Activated CD4-positive, alpha-beta memory T cell treated with anti-CD3 and anti-CD28 coated beads for 36 hours (primary cell): ENCODE measurements at regions of chr2 and their contacts with region 1.

Region 1: DNA sequence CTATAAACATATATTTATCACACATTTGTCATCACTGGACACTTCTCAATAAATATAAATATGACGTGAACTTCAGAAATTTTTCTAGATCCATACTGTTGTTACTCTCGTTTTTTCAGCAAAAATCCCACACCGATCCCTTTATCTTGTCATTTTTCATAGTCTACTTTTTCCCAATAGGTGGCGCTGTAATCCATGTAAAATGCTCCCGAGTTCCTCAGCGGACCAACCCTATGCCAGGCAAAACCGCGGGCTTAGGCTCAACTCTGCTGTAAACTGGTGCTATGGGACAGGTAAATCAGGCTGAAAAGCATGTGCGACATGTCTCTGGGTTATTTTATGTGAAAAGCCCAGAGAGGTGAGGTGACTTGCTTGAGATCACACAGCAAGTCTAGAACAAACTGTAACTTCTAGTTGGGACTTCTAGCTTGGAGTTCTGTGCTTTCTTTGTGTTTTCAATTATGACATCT is 104.0 kb downstream of the COBLL1 start:
- DNase-seq: peak; percentile 12
- H3K4me3 Mint-ChIP-seq: no peak overlapping the region
- H3K27ac Mint-ChIP-seq: no peak overlapping the region
- H3K4me1 Mint-ChIP-seq: no peaks in the 10 kb centered on the region
- H3K27me3 Mint-ChIP-seq: no peaks in the 10 kb centered on the region

Region 2: DNA sequence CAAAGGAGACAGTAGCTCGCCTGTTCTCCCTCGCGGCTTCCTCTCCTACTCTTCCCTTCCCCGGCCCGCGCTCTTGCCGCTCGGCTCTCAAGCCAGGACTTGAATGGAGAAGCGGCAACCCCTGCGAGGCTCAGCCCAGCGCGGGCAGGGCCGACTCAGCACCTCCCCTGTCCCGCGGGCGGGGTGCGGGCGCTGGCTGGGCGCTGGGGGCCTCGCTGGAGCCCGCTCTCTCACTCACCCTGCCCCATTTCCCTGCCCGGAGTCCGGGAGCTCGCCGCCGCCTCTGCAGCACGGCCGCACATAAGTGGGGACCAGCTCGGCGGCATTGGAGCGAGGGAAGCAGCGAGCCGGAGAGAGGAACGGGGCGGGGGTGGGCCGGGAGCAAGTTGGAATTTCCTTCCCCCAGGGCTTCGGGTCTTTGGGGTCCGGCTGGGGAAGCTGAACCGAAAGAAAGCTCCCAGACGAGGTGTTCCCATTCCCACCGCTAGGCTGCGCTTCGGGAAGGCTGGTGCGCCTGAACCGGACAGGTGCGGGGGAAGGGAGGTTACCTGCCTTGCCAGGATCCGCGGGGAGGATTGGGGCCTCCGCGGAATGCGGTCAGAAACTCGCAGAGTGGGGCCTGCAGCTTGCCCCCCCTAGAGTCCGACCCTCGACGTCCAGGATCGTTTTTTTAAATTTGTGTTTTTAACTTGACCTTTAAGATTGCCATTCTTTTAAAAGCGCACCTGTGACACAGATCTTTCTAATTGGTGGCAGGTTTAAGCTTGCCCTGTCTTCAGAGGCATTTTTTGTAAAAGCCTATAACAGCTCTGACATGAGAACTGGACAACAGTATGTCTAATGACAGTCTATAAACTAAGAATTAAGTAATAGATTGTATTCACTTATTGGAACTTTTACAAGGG is 104.3 kb after region 1 on chr2 and contains the start of gene COBLL1:
- CTCF ChIA-PET with region 1: no interaction called
- POLR2A ChIA-PET with region 1: no interaction called
- intact Hi-C with region 1: loop called (anchors 1 kb)
- DNase-seq: peak; percentile 43
- H3K4me3 Mint-ChIP-seq: peak within 1 kb of the TSS; percentile 41
- H3K27ac Mint-ChIP-seq: no peak within 1 kb of the TSS
- H3K4me1 Mint-ChIP-seq: peaks cover 5% of the 10 kb centered on the region
- H3K27me3 Mint-ChIP-seq: peaks cover 36% of the 10 kb centered on the region
- total RNA-seq, gene COBLL1: not detected

Region 3: DNA sequence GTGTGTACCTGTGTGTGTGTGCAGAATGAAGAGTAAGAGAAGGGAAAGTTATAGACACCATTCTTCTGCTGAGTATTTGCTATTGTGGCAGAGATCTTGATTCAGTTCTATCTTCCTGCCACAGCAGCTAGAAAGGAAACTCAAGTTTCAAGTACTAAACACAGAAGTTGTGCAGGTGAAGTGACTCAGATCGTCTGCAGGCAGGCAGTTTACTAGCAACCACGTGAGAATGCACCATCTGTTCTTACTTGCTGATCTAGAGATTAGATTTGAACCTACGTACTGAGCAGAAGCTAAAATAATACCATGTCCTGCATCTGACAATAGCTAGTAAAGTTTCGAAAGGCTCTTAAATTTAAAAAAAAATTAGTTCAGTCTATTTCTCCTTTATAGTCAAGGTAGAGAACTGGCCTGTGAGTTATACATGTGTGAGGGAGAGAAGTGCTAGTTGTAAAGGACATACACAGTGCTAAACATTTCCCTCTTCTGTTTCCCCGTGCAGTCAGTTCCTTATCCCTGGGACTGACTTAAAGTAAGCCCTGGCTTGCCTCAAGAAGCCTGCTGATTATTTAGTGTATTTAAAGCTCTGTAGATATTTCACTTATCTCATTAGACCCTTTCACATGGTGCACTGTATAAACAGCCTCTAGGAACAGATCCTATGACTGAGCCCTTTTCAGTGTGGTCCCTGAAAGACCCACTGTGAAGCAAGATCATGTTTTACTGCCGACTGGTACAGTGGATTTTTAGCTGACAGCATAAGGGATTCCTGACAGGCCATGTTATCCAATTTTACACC is 172.7 kb after region 1 on chr2:
- CTCF ChIA-PET with region 1: no interaction called
- POLR2A ChIA-PET with region 1: no interaction called
- intact Hi-C with region 1: loop called (anchors 5 kb)
- DNase-seq: peak; percentile 39
- H3K4me3 Mint-ChIP-seq: no peak overlapping the region
- H3K27ac Mint-ChIP-seq: no peak overlapping the region
- H3K4me1 Mint-ChIP-seq: no peaks in the 10 kb centered on the region
- H3K27me3 Mint-ChIP-seq: no peaks in the 10 kb centered on the region

Region 4: DNA sequence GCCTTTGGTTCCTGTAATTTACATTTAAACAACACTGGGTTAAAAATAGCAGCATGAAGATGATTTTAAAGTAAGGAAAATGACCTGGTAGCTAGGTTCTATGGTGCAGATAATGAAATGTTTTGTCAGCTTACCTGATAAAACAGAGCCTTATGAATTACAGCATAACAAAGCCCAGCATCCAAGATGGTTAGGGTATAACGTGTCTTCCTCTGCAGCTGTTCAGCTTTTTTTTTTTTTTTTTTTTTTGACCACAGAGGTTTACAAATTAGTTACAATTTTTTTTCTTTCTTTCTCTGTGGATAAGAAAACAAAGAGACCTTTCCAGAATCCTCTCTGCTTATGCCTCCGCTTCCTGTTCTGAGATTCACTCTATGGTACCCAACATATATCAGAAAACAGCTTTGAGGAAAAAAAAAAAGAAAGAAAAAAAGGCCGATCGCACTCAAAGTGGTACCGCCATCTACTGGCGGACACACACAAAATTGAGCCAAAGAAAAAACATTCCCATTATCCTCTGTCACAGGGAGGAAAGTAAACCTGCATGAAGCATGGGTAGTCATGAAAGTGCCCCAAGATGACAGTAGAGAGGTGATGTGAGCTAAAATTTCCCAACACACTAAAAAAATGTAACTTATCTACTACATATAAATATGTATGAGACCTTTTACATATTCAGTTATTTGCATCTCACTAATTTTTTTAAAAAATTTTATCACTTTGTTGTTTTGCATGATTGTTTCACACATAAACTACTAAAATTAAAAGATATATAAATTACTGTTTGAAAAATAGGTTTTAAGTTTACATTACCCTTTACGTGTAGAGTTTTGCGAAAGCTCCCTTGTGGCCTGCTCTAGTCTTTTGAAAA is 466.3 kb after region 1 on chr2 and contains the start of gene SCN3A:
- CTCF ChIA-PET with region 1: no interaction called
- POLR2A ChIA-PET with region 1: no interaction called
- intact Hi-C with region 1: loop called (anchors 10 kb)
- DNase-seq: no peak
- H3K4me3 Mint-ChIP-seq: no peak within 1 kb of the TSS
- H3K27ac Mint-ChIP-seq: no peak within 1 kb of the TSS
- H3K4me1 Mint-ChIP-seq: no peaks in the 10 kb centered on the region
- H3K27me3 Mint-ChIP-seq: peaks cover 2% of the 10 kb centered on the region
- total RNA-seq, gene SCN3A: not detected

Region 5: DNA sequence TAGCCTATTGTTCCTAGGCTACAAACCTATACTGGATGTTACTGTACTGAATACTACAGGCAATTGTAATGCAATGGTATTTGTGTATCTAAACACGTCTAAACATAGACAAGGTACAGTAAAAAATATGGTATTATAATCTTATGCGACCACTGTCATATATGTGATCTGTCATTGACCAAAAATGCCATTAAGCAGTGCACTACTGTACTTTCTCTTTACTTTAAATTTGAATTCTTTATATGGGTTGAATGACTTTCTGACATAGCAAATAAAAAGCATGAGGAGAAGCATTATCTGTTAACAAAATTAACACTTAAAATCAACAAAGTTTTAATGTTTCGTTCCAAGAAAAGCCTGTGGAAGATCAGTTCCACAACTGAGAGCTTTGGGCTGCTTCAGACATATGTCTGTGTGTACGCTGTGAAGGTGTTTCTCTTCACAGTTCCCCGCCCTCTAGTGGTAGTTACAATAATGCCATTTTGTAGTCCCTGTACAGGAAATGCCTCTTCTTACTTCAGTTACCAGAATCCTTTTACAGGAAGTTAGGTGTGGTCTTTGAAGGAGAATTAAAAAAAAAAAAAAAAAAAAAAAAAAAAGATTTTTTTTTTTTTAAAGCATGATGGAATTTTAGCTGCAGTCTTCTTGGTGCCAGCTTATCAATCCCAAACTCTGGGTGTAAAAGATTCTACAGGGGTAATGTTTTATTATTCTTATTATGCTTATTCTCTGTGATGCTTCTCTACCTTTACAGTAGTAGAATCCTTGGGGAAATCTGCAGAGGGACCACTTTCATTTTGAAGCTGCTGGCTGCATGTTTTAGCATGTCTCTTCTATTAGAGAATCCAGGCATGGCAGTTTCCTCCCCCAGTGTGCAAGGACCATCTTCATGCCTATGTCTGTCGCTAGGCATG is 556.0 kb after region 1 on chr2:
- CTCF ChIA-PET with region 1: no interaction called
- POLR2A ChIA-PET with region 1: no interaction called
- intact Hi-C with region 1: loop called (anchors 5 kb)
- DNase-seq: no peak
- H3K4me3 Mint-ChIP-seq: no peak overlapping the region
- H3K27ac Mint-ChIP-seq: no peak overlapping the region
- H3K4me1 Mint-ChIP-seq: peaks cover 2% of the 10 kb centered on the region
- H3K27me3 Mint-ChIP-seq: peaks cover 4% of the 10 kb centered on the region